Activated T-helper 1 cell treated with anti-CD3 and anti-CD28 coated beads, Interleukin-12 subunit alpha, Interleukin-12 subunit beta, Interleukin-2, Interleukin-4 antibody, amounts not matched to agents 30 ng/mL and 10 ng/mL and 1 ng/mL, durations not matched to agents 14 hours and 24 hours and 36 hours (primary cell): ENCODE measurements at regions of chr15 and their contacts with region 1.

Region 1: GRCh38 chr15:59372352-59373211 is at the start of gene MYO1E:
- DNase-seq: peak; percentile 34
- H3K4me3 Mint-ChIP-seq: peak within 1 kb of the TSS; percentile 96
- H3K27ac Mint-ChIP-seq: peak within 1 kb of the TSS; percentile 79
- H3K4me1 Mint-ChIP-seq: peaks cover 42% of the 10 kb centered on the region
- H3K27me3 Mint-ChIP-seq: peaks cover 31% of the 10 kb centered on the region
- total RNA-seq, gene MYO1E: 33.3 and 33.6 TPM in 2 replicates

Region 2: GRCh38 chr15:59255647-59256380 is 116.8 kb before region 1 on chr15:
- intact Hi-C with region 1: loop called (anchors 5 kb)
- DNase-seq: peak; percentile 34
- H3K4me3 Mint-ChIP-seq: no peak overlapping the region
- H3K27ac Mint-ChIP-seq: peak overlapping the region; percentile 76
- H3K4me1 Mint-ChIP-seq: peaks cover 47% of the 10 kb centered on the region
- H3K27me3 Mint-ChIP-seq: peaks cover 3% of the 10 kb centered on the region

Region 3: GRCh38 chr15:59274126-59274970 is 98.2 kb before region 1 on chr15:
- intact Hi-C with region 1: loop called (anchors 5 kb)
- DNase-seq: no peak
- H3K4me3 Mint-ChIP-seq: peak overlapping the region; percentile 28
- H3K27ac Mint-ChIP-seq: peak overlapping the region; percentile 67
- H3K4me1 Mint-ChIP-seq: peaks cover 66% of the 10 kb centered on the region
- H3K27me3 Mint-ChIP-seq: peaks cover 7% of the 10 kb centered on the region

Region 4: GRCh38 chr15:59443341-59444072 is 70.9 kb after region 1 on chr15:
- intact Hi-C with region 1: no loop called
- DNase-seq: no peak
- H3K4me3 Mint-ChIP-seq: no peak overlapping the region
- H3K27ac Mint-ChIP-seq: no peak overlapping the region
- H3K4me1 Mint-ChIP-seq: peaks cover 11% of the 10 kb centered on the region
- H3K27me3 Mint-ChIP-seq: peaks cover 40% of the 10 kb centered on the region